Activated CD8-positive, alpha-beta T cell treated with anti-CD3 and anti-CD28 coated beads, Interleukin-2, amount 10 ng/mL, durations not matched to agents 7 days and 5 days (primary cell): ENCODE measurements at regions of chr22 and their contacts with region 1.

Region 1: DNA sequence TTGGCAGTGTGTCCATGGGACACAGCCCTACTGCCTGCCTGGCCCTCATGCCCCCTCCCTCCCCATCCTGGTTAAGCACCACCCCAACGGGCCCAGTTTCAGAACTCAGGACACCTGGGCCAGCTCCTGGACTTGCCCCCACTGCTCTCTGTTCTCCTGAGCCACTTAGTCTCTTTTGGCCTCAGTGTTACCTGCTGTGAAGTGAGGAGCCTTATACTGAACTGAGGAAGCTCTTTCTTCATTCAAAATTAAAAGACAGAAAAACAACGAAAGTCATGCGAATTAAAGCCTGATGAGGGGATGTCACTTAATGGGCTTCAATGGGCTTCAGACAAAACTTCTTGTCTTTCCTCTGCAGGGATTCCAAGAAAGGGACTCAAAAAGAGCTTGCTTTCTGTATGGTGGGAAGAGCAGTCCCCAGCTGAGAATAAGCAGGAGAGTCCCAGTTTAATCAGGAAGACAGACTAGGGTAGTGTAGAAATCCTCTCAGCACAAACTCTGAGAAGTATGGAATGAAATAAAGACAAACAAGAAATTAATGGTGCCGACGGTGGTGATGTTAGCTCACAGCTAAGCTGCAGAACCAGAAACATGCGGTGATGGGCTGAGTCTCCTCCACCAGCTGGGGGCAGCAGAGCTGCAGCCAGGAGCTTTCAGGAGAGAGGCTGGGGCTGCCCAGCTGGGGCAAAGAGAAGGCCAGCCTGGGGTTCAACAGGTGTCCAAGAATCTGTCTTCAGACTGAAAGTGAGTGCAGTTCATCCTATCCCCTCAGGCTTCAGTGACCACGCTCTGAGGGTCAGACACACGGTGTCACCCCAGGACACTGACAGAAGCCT is 101.0 kb downstream of the GGTLC2 start:
- DNase-seq: peak; percentile 57
- ATAC-seq: peak; percentile 74
- H3K4me3 Mint-ChIP-seq: no peak overlapping the region
- H3K27ac Mint-ChIP-seq: no peak overlapping the region
- H3K4me1 Mint-ChIP-seq: no peaks in the 10 kb centered on the region
- H3K27me3 Mint-ChIP-seq: peaks cover 27% of the 10 kb centered on the region

Region 2: DNA sequence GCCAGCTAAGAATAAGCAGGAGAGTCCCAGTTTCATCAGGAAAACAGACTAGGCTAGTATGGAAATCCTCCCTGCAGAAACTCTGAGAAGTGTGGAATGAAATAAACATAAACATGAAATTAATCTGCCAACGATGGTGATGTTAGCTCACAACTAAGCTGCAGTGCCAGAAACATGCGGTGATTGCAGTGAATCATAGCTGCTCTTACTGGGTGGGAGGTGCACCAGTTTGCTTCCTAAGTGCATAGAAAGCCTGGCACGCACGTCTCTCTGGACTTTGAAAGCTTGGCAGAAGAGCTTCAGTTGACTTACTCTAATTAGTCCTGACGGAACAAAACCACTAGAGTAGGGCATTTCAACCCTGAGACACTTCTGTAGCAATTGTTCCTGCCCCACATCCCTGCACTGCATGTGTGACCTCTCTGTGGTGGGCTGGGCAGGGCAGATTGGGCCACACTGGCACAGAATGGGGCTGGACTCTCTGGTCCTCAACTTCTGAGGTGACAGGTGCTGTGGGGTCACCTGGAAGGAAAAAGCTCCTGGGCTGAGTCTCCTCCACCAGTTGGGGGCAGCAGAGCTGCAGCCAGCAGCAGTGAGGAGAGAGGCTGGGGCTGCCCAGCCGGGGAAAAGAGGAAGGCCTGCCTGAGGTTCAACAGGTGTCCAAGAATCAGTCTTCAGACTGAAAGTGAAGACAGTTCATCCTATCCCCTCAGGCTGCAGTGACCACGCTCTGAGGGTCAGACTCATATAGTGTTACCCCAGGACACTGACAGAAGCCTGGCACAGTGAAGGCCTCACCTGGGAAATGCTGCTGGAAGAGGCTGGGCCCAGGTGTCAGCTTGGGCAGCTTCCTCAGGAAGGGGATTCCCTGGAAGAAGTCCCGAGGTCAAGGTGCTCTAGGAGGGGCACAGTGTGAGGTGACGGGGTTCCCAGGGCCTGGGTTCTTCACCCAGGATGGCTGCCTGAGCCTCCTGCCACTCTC is 60.6 kb before region 1 on chr22:
- CTCF ChIA-PET with region 1: interaction called, 10 read pairs
- POLR2A ChIA-PET with region 1: no interaction called
- DNase-seq: peak; percentile 30
- ATAC-seq: peak; percentile 55
- H3K4me3 Mint-ChIP-seq: no peak overlapping the region
- H3K27ac Mint-ChIP-seq: no peak overlapping the region
- H3K4me1 Mint-ChIP-seq: no peaks in the 10 kb centered on the region
- H3K27me3 Mint-ChIP-seq: peaks cover 3% of the 10 kb centered on the region

Region 3: DNA sequence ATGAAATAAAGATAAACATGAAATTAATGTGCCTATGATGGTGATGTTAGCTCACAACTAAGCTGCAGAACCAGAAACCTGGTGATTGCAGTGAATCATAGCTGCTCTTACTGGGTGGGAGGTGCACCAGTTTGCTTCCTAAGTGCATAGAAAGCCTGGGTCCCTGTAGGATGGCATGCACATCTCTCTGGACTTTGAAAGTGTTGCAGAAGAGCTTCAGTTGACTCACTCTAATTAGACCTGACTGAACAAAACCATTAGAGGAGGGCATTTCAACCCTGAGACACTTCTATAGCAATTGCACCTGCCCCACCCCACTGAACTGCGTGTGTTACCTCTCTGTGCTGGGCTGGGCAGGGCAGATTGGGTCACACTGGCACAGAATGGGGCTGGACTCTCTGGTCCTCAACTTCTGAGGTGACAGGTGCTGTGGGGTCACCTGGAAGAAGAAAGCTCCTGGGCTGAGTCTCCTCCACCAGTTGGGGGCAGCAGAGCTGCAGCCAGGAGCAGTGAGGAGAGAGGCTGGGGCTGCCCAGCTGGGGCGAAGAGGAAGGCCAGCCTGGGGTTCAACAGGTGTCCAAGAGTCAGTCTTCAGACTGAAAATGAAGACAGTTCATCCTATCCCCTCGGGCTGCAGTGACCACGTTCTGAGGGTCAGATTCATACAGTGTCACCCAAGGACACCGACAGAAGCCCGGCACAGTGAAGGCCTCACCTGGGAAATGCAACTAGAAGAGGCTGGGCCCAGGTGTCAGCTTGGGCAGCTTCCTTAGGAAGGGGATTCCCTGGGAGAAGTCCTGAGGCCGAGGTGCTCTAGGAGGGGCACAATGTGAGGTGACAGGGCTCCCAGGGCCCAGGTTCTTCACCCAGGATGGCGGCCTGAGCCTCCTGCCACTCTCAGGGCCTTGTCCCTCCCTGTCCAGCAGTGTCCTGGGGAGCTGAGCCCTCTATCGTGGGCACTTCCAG is 42.9 kb before region 1 on chr22:
- CTCF ChIA-PET with region 1: interaction called, 12 read pairs
- POLR2A ChIA-PET with region 1: no interaction called
- DNase-seq: no peak
- ATAC-seq: no peak
- H3K4me3 Mint-ChIP-seq: no peak overlapping the region
- H3K27ac Mint-ChIP-seq: no peak overlapping the region
- H3K4me1 Mint-ChIP-seq: peaks cover 9% of the 10 kb centered on the region
- H3K27me3 Mint-ChIP-seq: peaks cover 2% of the 10 kb centered on the region

Region 4: GRCh38 chr22:22710719-22711531 is 34.5 kb before region 1 on chr22:
- CTCF ChIA-PET with region 1: interaction called, 20 read pairs
- POLR2A ChIA-PET with region 1: no interaction called
- DNase-seq: peak; percentile 81
- ATAC-seq: peak; percentile 86
- H3K4me3 Mint-ChIP-seq: no peak overlapping the region
- H3K27ac Mint-ChIP-seq: no peak overlapping the region
- H3K4me1 Mint-ChIP-seq: peaks cover 4% of the 10 kb centered on the region
- H3K27me3 Mint-ChIP-seq: no peaks in the 10 kb centered on the region

Region 5: DNA sequence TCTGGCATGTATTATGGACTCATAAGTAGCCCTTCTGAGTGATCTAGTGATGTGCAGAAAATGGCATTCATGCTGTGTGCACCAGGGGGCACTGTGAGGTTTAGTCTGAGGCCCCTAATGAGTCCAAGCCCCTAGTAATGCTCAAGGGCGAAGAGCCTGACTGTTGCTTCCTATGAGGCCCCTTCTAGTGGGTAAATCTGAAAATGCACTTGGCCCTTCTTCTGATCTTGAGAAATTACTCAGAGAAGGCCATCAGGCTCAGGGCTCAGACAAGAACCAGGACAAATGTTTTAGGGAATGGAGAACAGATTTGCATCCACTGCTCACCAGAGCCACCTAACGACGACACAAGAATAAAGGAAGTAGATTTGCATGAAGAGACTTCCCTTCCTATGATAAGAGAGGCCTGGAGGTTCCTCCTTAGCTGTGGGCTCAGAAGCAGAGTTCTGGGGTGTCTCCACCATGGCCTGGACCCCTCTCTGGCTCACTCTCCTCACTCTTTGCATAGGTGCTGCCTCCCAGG is 25.2 kb before region 1 on chr22:
- CTCF ChIA-PET with region 1: interaction called, 37 read pairs
- POLR2A ChIA-PET with region 1: no interaction called
- DNase-seq: peak; percentile 68
- ATAC-seq: peak; percentile 85
- H3K4me3 Mint-ChIP-seq: no peak overlapping the region
- H3K27ac Mint-ChIP-seq: peak overlapping the region; percentile 42
- H3K4me1 Mint-ChIP-seq: peaks cover 30% of the 10 kb centered on the region
- H3K27me3 Mint-ChIP-seq: peaks cover 16% of the 10 kb centered on the region

Region 6: GRCh38 chr22:22770280-22770871 is 24.9 kb after region 1 on chr22:
- CTCF ChIA-PET with region 1: interaction called, 134 read pairs
- POLR2A ChIA-PET with region 1: no interaction called
- DNase-seq: peak; percentile 59
- ATAC-seq: peak; percentile 69
- H3K4me3 Mint-ChIP-seq: no peak overlapping the region
- H3K27ac Mint-ChIP-seq: no peak overlapping the region
- H3K4me1 Mint-ChIP-seq: no peaks in the 10 kb centered on the region
- H3K27me3 Mint-ChIP-seq: peaks cover 18% of the 10 kb centered on the region